Activated T-helper 2 cell treated with anti-CD3 and anti-CD28 coated beads, Interferon-gamma antibody, Interleukin-2, Interleukin-4, amounts not matched to agents 10 μg/mL and 5 μg/mL and 100 μg/mL, durations not matched to agents 14 hours and 24 hours and 36 hours (primary cell): ENCODE measurements at regions of chr22 and their contacts with region 1.

Region 1: DNA sequence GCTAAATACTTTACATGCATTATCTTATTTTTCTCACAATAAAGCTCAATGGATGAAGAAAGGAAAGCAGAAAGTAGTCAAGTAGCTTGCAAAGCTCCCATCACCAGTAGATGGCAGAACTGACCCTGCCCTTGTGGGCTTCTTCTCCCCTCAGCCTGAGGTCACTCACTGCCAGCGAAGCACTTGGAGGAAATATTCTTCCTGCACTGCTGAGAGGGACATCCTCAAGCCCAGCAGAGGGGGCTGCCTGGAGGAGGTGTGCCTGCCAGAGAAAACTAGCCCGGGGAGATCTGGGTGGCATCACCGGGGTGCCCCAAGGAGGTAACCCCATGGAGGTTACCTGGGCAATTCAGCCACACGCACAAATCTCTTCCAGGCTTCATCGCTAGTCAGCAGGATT is 6.6 kb downstream of the APOL4 start:
- DNase-seq: no peak
- H3K4me3 Mint-ChIP-seq: no peak overlapping the region
- H3K27ac Mint-ChIP-seq: no peak overlapping the region
- H3K4me1 Mint-ChIP-seq: peaks cover 24% of the 10 kb centered on the region
- H3K27me3 Mint-ChIP-seq: peaks cover 5% of the 10 kb centered on the region

Region 2: DNA sequence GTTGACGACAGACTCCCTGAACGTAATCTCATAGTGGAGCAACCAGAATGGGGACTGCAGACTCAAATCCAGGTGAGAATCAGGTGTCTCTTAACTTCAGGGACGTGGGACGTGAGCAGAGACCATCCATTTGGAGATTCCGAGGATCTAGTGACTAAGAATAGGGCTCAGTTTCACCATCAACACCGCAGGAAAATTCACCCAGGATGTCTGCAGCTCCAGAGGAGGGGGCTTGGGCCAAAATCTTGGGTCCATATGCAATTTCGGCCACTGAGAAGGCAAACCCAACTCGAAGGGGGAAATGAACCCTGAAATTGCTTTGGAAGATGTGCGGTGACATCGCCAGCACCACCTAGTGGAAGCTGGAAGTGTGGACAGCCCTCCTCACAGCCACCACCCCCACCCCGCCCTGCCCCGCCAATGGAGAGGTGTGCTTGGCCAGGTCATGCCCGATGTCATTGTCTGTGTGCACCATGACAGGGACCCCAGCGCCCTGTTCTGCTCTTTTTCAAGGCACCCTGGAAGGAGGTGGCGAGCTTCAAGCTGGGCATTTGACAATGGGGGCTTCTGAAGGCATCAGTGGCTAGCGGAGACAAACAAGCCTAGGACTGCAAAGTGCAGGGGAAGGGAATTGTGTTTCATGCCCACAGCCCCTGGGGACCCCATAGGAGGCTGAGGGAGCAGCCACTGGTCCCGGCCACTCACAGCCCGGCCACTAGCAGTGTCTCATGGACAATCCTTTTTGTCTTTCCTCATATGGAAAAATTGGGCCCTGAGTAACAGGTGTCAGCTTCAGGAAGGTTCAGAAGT is 82.7 kb after region 1 on chr22:
- intact Hi-C with region 1: loop called (anchors 5 kb)
- DNase-seq: peak; percentile 45
- H3K4me3 Mint-ChIP-seq: no peak overlapping the region
- H3K27ac Mint-ChIP-seq: peak overlapping the region; percentile 40
- H3K4me1 Mint-ChIP-seq: peaks cover 4% of the 10 kb centered on the region
- H3K27me3 Mint-ChIP-seq: no peaks in the 10 kb centered on the region